ENCODE measurements at regions of chr2 and their contacts with region 1.

Region 1: DNA sequence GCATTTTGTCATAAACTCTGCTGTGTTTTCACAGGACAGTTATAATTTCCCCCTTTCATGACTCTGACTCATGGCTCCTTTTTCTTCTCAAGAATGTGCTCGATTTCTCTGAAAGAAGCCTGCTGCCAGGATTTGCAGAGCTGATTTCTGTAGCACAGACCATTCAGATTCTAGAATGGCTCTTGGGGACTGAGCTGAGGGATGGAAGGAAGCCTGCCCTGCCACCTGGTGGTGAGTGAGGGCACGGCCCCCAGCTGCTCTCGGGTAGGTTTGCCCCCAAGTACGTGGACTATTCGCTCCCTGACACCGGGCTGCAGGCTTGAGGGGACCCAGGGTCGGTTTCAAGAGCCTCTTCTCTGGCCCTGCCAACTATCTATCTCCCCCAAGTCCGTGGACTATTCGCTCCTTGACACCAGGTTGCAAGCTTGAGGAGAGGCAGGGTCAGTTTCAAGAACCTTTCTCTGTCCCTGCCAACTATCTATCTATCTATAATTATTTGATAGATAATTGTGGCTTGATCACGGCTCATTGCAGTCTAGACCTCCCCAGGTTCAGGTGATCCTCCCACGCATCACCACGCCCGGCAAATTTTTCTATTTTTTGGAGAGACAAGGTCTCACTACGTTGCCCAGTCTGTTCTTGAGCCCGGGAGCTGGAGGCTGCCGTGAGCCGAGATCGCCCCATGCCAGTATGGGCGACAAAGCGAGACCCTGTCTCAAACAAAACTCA is 1.4 kb upstream of the SMYD5 start:
- DNase-seq: peak; percentile 51 to 84 (median 73)
- ATAC-seq: peak; percentile 67
- H3K4me3 ChIP-seq: no peak overlapping the region
- H3K4me3 Mint-ChIP-seq: peak overlapping the region; percentile 98
- H3K27ac ChIP-seq: no peak overlapping the region
- H3K27ac Mint-ChIP-seq: peak overlapping the region; percentile 30
- H3K4me1 ChIP-seq: peaks cover 26% of the 10 kb centered on the region
- H3K4me1 Mint-ChIP-seq: peaks cover 33% of the 10 kb centered on the region
- H3K27me3 ChIP-seq: no peaks in the 10 kb centered on the region
- H3K27me3 Mint-ChIP-seq: peaks cover 7% of the 10 kb centered on the region
- CTCF ChIP-seq: peak; percentile 81

Region 2: DNA sequence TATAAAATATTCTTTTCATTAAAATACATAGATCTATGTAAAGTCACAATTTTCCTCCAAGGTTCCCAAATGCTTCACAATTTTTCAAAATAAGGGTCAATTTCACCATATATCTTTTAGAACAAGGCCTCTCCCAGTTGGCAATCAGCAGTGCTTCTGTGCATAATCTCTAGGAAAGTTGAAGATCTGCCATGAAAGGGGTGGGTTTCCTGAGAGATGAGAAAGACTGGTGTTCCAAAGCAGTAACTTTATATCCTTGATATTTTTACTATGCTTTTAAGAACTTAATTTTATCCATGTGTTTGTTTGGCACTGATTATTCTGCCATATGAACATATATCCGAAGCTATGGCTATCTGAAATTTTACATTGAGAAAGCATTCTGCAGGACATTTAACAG is 865.5 kb before region 1 on chr2:
- CTCF ChIA-PET with region 1: no interaction called
- POLR2A ChIA-PET with region 1: no interaction called
- intact Hi-C with region 1: no loop called
- DNase-seq: no peak
- ATAC-seq: no peak
- H3K4me3 ChIP-seq: no peak overlapping the region
- H3K4me3 Mint-ChIP-seq: no peak overlapping the region
- H3K27ac ChIP-seq: no peak overlapping the region
- H3K27ac Mint-ChIP-seq: no peak overlapping the region
- H3K4me1 ChIP-seq: no peaks in the 10 kb centered on the region
- H3K4me1 Mint-ChIP-seq: no peaks in the 10 kb centered on the region
- H3K27me3 ChIP-seq: no peaks in the 10 kb centered on the region
- H3K27me3 Mint-ChIP-seq: no peaks in the 10 kb centered on the region
- CTCF ChIP-seq: no peak

Region 3: DNA sequence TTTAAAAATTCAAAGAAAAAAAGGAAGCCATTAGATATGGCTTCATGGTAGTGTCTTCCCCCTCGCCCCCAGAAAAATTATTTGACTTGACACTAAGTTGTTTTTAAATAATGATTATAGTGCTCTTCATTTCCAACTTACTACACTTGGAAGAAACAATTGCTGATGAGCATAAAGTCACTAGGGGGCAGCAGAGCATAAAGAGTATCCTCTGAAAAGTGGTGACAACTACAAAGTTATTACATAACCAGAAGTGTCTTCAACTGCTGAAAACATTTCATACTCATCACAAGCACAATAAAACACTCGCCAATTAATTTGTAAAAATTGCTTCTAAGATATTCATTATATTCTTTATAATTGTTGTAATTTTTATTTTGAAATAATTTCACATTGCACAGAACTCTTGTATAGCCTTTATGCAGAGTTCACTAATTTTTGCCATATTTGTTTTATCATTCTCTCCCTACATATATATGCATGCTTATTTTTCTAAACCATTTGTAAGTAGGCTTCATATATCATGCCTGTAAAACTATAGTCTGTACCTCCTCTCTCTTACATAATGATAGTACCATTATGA is 441.6 kb before region 1 on chr2:
- CTCF ChIA-PET with region 1: no interaction called
- POLR2A ChIA-PET with region 1: no interaction called
- intact Hi-C with region 1: loop called in 1 of 2 experiments (anchors 2 kb)
- DNase-seq: peak; percentile 10 to 80 (median 57)
- ATAC-seq: peak; percentile 49
- H3K4me3 ChIP-seq: no peak overlapping the region
- H3K4me3 Mint-ChIP-seq: no peak overlapping the region
- H3K27ac ChIP-seq: no peak overlapping the region
- H3K27ac Mint-ChIP-seq: no peak overlapping the region
- H3K4me1 ChIP-seq: no peaks in the 10 kb centered on the region
- H3K4me1 Mint-ChIP-seq: no peaks in the 10 kb centered on the region
- H3K27me3 ChIP-seq: no peaks in the 10 kb centered on the region
- H3K27me3 Mint-ChIP-seq: no peaks in the 10 kb centered on the region
- CTCF ChIP-seq: peak; percentile 94

Region 4: GRCh38 chr2:73043929-73044832 is 168.4 kb before region 1 on chr2:
- CTCF ChIA-PET with region 1: no interaction called
- POLR2A ChIA-PET with region 1: no interaction called
- intact Hi-C with region 1: no loop called
- DNase-seq: peak in 2 of 9 experiments; percentile 7 to 53
- ATAC-seq: peak; percentile 29
- H3K4me3 ChIP-seq: no peak overlapping the region
- H3K4me3 Mint-ChIP-seq: no peak overlapping the region
- H3K27ac ChIP-seq: no peak overlapping the region
- H3K27ac Mint-ChIP-seq: peak overlapping the region; percentile 64
- H3K4me1 ChIP-seq: peaks cover 14% of the 10 kb centered on the region
- H3K4me1 Mint-ChIP-seq: peaks cover 11% of the 10 kb centered on the region
- H3K27me3 ChIP-seq: no peaks in the 10 kb centered on the region
- H3K27me3 Mint-ChIP-seq: no peaks in the 10 kb centered on the region
- CTCF ChIP-seq: no peak

Region 5: DNA sequence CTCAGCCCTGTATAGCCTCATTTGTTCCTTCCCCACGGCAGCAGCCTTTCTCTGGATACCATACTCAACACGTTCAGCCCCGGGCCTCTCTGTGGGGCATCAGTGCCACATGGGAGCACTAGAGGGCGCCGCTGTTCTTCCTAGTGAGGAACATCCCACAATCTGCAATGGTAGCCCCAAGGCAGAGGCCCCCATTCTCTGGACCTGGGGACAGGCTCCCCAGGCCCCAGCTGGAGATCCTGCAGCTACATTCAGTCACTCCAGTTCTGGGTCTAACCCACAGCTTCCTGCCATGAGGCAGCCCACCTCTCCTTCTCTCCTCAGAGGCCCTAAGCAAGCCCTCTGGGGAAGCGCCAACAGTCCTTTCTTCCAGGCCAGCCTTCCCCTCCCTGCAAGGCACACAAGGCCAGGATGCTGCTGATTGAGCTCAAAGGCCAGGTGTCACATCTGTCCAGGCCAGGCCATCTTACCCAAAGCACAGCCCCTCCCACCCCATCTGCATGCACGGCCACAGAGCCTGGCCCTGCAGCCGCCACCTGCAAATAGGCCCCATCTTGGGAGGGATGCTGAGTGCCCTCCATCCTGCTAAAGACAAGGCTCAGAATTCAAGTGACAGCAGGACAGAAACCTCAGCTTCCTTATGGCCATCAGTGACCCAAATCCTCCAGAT is 126.8 kb before region 1 on chr2:
- CTCF ChIA-PET with region 1: interaction called, 34 read pairs
- POLR2A ChIA-PET with region 1: no interaction called
- intact Hi-C with region 1: loop called (anchors 1 kb)
- DNase-seq: peak; percentile 69 to 87 (median 82)
- ATAC-seq: peak; percentile 99
- H3K4me3 ChIP-seq: no peak overlapping the region
- H3K4me3 Mint-ChIP-seq: no peak overlapping the region
- H3K27ac ChIP-seq: no peak overlapping the region
- H3K27ac Mint-ChIP-seq: no peak overlapping the region
- H3K4me1 ChIP-seq: no peaks in the 10 kb centered on the region
- H3K4me1 Mint-ChIP-seq: no peaks in the 10 kb centered on the region
- H3K27me3 ChIP-seq: no peaks in the 10 kb centered on the region
- H3K27me3 Mint-ChIP-seq: no peaks in the 10 kb centered on the region
- CTCF ChIP-seq: peak; percentile 70

Region 6: DNA sequence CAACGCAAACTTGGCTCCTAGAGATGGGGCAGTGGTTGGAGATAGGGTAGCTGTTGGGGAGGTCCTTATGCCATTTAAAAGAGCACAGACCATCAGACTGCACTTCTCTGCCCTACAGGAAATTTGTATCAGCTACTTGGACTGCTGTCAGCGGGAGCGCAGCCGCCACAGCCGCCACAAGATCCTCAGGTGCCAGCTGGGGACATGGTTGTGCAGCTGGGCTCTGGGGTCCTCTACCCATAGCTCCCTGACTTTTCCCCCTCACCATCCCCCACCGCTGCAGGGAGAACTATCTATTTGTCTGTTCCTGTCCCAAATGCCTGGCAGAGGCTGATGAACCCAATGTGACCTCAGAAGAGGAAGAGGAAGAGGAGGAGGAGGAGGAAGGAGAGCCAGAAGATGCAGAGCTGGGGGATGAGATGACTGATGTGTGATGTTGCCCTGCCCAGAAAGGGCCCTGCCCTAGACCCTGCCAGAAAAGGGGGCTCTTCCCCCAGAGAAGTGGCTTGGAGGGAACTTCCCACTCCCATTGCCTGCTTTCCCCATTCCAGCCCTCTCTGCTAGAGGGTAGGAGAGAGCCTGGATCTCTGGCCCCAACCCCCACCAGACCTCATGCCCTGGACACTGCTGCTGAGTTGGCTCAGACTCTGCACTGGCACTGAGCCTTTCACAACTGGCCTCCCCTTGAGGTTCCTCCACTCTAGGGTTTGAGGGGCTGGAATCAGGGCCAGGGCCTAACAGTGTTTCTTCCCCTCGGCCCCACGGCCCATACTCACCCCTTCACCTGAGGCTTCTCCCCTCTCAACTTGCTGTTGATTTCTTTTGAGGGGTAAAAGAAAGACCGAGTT is 13.1 kb after region 1 on chr2:
- CTCF ChIA-PET with region 1: interaction called, 15 read pairs
- POLR2A ChIA-PET with region 1: interaction called, 3 read pairs
- intact Hi-C with region 1: no loop called
- DNase-seq: no peak
- ATAC-seq: no peak
- H3K4me3 ChIP-seq: no peak overlapping the region
- H3K4me3 Mint-ChIP-seq: no peak overlapping the region
- H3K27ac ChIP-seq: no peak overlapping the region
- H3K27ac Mint-ChIP-seq: no peak overlapping the region
- H3K4me1 ChIP-seq: no peaks in the 10 kb centered on the region
- H3K4me1 Mint-ChIP-seq: no peaks in the 10 kb centered on the region
- H3K27me3 ChIP-seq: no peaks in the 10 kb centered on the region
- H3K27me3 Mint-ChIP-seq: no peaks in the 10 kb centered on the region
- CTCF ChIP-seq: no peak

Region 7: GRCh38 chr2:73284296-73285158 is 71.9 kb after region 1 on chr2 and contains the start of gene FBXO41:
- CTCF ChIA-PET with region 1: interaction called, 13 read pairs
- POLR2A ChIA-PET with region 1: no interaction called
- intact Hi-C with region 1: loop called in 1 of 2 experiments (anchors 1 kb)
- DNase-seq: peak; percentile 26 to 87 (median 68)
- ATAC-seq: peak; percentile 84
- H3K4me3 ChIP-seq: peak within 1 kb of the TSS; percentile 77 to 81
- H3K4me3 Mint-ChIP-seq: peak within 1 kb of the TSS; percentile 91
- H3K27ac ChIP-seq: peak within 1 kb of the TSS; percentile 61 to 74
- H3K27ac Mint-ChIP-seq: peak within 1 kb of the TSS; percentile 75
- H3K4me1 ChIP-seq: peaks cover 20% of the 10 kb centered on the region
- H3K4me1 Mint-ChIP-seq: peaks cover 24% of the 10 kb centered on the region
- H3K27me3 ChIP-seq: no peaks in the 10 kb centered on the region
- H3K27me3 Mint-ChIP-seq: peaks cover 8% of the 10 kb centered on the region
- CTCF ChIP-seq: no peak
- total RNA-seq, gene FBXO41: 22.1 to 23.6 TPM

Region 8: GRCh38 chr2:73385595-73386341 is 173.2 kb after region 1 on chr2 and contains the start of gene ALMS1:
- CTCF ChIA-PET with region 1: no interaction called
- POLR2A ChIA-PET with region 1: no interaction called
- intact Hi-C with region 1: loop called in 1 of 2 experiments (anchors 1 kb)
- DNase-seq: peak; percentile 76 to 96 (median 86)
- ATAC-seq: peak; percentile 88
- H3K4me3 ChIP-seq: peak within 1 kb of the TSS; percentile 75 to 88
- H3K4me3 Mint-ChIP-seq: peak within 1 kb of the TSS; percentile 88
- H3K27ac ChIP-seq: peak within 1 kb of the TSS; percentile 88 to 90
- H3K27ac Mint-ChIP-seq: peak within 1 kb of the TSS; percentile 94
- H3K4me1 ChIP-seq: peaks cover 20% of the 10 kb centered on the region
- H3K4me1 Mint-ChIP-seq: peaks cover 39% of the 10 kb centered on the region
- H3K27me3 ChIP-seq: no peaks in the 10 kb centered on the region
- H3K27me3 Mint-ChIP-seq: peaks cover 2% of the 10 kb centered on the region
- CTCF ChIP-seq: no peak
- total RNA-seq, gene ALMS1: 14.8 to 16.4 TPM